ENCODE measurements at regions of chr5 and their contacts with region 1.

Region 1: GRCh38 chr5:137665678-137666460 is 70.0 kb downstream of the KLHL3 start:
- DNase-seq: peak in 8 of 9 donors; percentile 23 to 66 (median 53)
- ATAC-seq: peak; percentile 99
- H3K4me3 ChIP-seq: no peak overlapping the region
- H3K4me3 Mint-ChIP-seq: peak overlapping the region in 6 of 10 donors; percentile 18 to 56 (median 46)
- H3K27ac ChIP-seq: peak overlapping the region; percentile 30
- H3K27ac Mint-ChIP-seq: peak overlapping the region; percentile 43 to 91 (median 70)
- H3K4me1 ChIP-seq: peaks cover 7 to 9% of the 10 kb centered on the region in 2 donors
- H3K4me1 Mint-ChIP-seq: peaks cover 8 to 35% (median 27%) of the 10 kb centered on the region in 7 donors
- H3K27me3 ChIP-seq: no peaks in the 10 kb centered on the region
- H3K27me3 Mint-ChIP-seq: no peaks in the 10 kb centered on the region

Region 2: GRCh38 chr5:137735555-137736284 is 69.9 kb after region 1 on chr5 and contains the start of gene KLHL3:
- CTCF ChIA-PET with region 1: interaction called, 328 read pairs
- POLR2A ChIA-PET with region 1: interaction called, 56 read pairs
- intact Hi-C with region 1: loop called in 1 of 2 experiments (anchors 1 kb)
- DNase-seq: peak in 8 of 9 donors; percentile 32 to 57 (median 44)
- ATAC-seq: peak; percentile 49
- H3K4me3 ChIP-seq: peak within 1 kb of the TSS; percentile 86
- H3K4me3 Mint-ChIP-seq: no peak within 1 kb of the TSS
- H3K27ac ChIP-seq: peak within 1 kb of the TSS; percentile 63
- H3K27ac Mint-ChIP-seq: no peak within 1 kb of the TSS
- H3K4me1 ChIP-seq: peaks cover 9 to 58% of the 10 kb centered on the region in 2 donors
- H3K4me1 Mint-ChIP-seq: peaks cover 0 to 42% (median 15%) of the 10 kb centered on the region in 7 donors
- H3K27me3 ChIP-seq: no peaks in the 10 kb centered on the region
- H3K27me3 Mint-ChIP-seq: no peaks in the 10 kb centered on the region
- total RNA-seq, gene KLHL3: 10.4 to 47.3 (median 26.6) TPM

Region 3: GRCh38 chr5:137743031-137743640 is 77.3 kb after region 1 on chr5:
- CTCF ChIA-PET with region 1: interaction called, 328 read pairs
- POLR2A ChIA-PET with region 1: interaction called, 56 read pairs
- intact Hi-C with region 1: no loop called
- DNase-seq: peak in 8 of 9 donors; percentile 34 to 77 (median 72)
- ATAC-seq: peak; percentile 93
- H3K4me3 ChIP-seq: no peak overlapping the region
- H3K4me3 Mint-ChIP-seq: peak overlapping the region in 1 of 10 donors; percentile 54
- H3K27ac ChIP-seq: no peak overlapping the region
- H3K27ac Mint-ChIP-seq: peak overlapping the region in 2 of 9 donors; percentile 64 to 70
- H3K4me1 ChIP-seq: peaks cover 1 to 12% of the 10 kb centered on the region in 2 donors
- H3K4me1 Mint-ChIP-seq: peaks cover 5 to 32% (median 12%) of the 10 kb centered on the region in 7 donors
- H3K27me3 ChIP-seq: no peaks in the 10 kb centered on the region
- H3K27me3 Mint-ChIP-seq: peaks cover 0 to 3% (median 0%) of the 10 kb centered on the region in 5 donors

Region 4: DNA sequence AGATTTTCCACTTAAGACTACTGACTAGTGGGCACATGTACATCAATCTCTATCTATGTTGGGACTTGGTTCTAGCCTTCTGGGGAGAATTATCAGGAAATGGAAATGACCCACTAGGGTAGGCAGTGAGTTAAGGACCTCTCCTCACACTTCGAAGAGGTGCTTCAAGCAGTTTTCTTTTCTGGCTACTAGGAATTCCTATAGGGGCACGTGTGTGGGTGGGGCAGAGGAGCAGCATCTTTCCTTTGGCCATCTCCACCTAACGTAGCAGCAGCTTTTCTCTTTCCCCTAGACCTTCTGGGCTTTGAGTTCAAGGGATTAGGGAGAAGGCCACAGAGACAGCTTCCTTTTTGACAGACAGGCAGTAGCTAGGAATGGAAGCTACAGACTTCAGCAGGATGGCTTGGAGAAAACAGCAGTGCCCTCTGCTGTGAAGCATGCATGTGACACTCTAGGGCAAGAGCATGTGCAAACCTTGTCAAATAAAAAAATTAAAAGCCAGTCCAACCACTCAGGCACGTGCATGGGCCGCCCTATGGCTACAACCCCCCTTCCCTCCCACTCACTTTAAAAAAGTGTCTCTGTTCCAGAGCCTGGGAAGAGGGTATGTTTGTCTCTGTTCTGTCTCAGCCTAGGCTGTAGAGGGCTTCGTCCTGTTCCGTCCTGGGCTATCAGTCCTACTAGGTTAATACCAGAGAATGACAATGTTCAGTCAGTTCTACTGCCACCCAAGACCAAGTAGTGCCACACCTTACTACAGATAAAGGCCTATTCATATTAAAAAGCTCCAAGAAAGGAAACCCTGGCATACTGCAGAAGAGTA is 617.3 kb after region 1 on chr5:
- CTCF ChIA-PET with region 1: no interaction called
- POLR2A ChIA-PET with region 1: no interaction called
- intact Hi-C with region 1: no loop called
- DNase-seq: no peak
- ATAC-seq: peak; percentile 36
- H3K4me3 ChIP-seq: no peak overlapping the region
- H3K4me3 Mint-ChIP-seq: no peak overlapping the region
- H3K27ac ChIP-seq: no peak overlapping the region
- H3K27ac Mint-ChIP-seq: no peak overlapping the region
- H3K4me1 ChIP-seq: no peaks in the 10 kb centered on the region
- H3K4me1 Mint-ChIP-seq: no peaks in the 10 kb centered on the region
- H3K27me3 ChIP-seq: no peaks in the 10 kb centered on the region
- H3K27me3 Mint-ChIP-seq: no peaks in the 10 kb centered on the region